Endothelial cell of umbilical vein (primary cell): ENCODE measurements at regions of chr3 and their contacts with region 1.

Region 1: DNA sequence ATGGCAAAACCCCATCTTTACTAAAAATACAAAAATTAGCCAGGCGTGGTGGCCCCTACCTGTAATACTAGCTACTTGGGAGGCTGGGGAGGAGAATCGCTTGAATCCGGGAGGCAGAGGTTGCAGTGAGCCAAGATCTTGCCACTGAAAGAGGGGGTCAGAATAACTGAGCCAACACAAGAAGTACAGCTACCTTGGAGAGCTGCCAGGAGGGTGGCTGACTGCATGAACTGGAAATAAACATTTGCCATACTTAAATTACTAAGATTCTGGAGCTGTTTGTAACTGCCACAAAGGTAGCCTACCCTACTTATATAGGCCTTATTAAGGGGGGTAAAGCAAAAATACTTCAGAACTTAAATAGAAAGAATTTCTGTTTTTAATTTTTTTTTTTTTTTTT is 15.4 kb upstream of the PIK3CB start:
- DNase-seq: peak; percentile 40
- H3K4me3 ChIP-seq: no peak overlapping the region
- H3K27ac ChIP-seq: no peak overlapping the region
- H3K4me1 ChIP-seq: peaks cover 5% of the 10 kb centered on the region
- H3K27me3 ChIP-seq: no peaks in the 10 kb centered on the region
- CTCF ChIP-seq: no peak
- POLR2A ChIP-seq: no peak

Region 2: DNA sequence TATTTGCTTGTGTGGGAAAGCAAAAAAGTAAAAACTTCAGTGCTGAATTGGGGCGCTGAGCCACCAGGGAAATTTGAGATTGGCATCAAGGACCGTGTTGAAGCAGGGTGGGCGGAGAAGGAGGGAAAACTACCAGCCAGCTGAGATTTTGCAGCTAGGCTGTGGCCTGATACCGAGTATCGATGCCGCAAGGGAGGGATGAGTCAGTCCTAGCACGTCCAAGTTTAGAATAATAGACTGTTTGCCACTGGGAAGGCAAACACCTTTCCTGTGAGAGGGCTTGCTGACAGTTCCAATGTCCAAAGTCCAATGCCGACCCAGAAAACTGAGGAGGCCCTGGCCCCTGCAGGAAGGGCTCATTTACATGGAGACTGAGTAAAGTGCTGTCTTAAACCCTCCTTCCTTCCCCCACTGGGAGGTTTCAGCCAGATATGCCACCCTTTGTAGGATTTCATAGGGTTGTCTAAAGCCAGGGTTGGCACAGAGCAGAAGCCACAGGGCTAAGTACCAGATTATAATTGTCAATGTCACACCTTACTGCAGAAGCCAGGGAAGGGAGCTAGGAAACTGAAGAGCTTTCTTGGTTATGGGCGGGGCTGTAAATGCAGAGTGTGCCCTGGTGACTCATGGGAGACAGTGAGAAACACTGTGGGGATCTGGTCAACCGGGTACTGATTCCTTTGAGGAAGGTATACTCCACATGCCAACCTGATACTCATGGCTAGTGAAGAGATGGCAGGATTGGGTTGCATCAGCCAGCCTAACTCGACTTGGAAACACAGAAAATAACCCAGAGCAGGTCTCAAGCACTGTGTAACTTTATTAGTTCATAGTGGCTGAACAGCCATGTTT is 13.0 kb after region 1 on chr3:
- CTCF ChIA-PET with region 1: no interaction called
- POLR2A ChIA-PET with region 1: no interaction called
- dilution Hi-C with region 1: no loop called
- intact Hi-C with region 1: loop called (anchors 1 kb)
- DNase-seq: peak; percentile 70
- H3K4me3 ChIP-seq: no peak overlapping the region
- H3K27ac ChIP-seq: peak overlapping the region; percentile 50
- H3K4me1 ChIP-seq: peaks cover 17% of the 10 kb centered on the region
- H3K27me3 ChIP-seq: no peaks in the 10 kb centered on the region
- CTCF ChIP-seq: no peak
- POLR2A ChIP-seq: no peak

Region 3: GRCh38 chr3:139281522-139282196 is 431.5 kb after region 1 on chr3:
- CTCF ChIA-PET with region 1: no interaction called
- POLR2A ChIA-PET with region 1: no interaction called
- dilution Hi-C with region 1: no loop called
- intact Hi-C with region 1: no loop called
- DNase-seq: no peak
- H3K4me3 ChIP-seq: no peak overlapping the region
- H3K27ac ChIP-seq: no peak overlapping the region
- H3K4me1 ChIP-seq: no peaks in the 10 kb centered on the region
- H3K27me3 ChIP-seq: no peaks in the 10 kb centered on the region
- CTCF ChIP-seq: no peak
- POLR2A ChIP-seq: no peak